Gastrocnemius medialis (tissue), 4 donors: ENCODE measurements at regions of chr3 and their contacts with region 1.

Region 1: GRCh38 chr3:127822698-127823425 is 547 bp upstream of the MGLL start:
- DNase-seq: peak; percentile 48 to 69
- ATAC-seq: peak; percentile 65 to 75
- H3K4me3 ChIP-seq: peak overlapping the region; percentile 67 to 92 (median 85)
- H3K27ac ChIP-seq: peak overlapping the region; percentile 80 to 92 (median 84)
- H3K4me1 ChIP-seq: peaks cover 36 to 45% of the 10 kb centered on the region in 2 donors
- H3K27me3 ChIP-seq: no peaks in the 10 kb centered on the region
- CTCF ChIP-seq: peak in 1 of 5 experiments; percentile 25
- POLR2A ChIP-seq: peak; percentile 43 to 49

Region 2: GRCh38 chr3:127672516-127673190 is 150.2 kb before region 1 on chr3 and contains the start of gene ABTB1:
- in situ Hi-C with region 1: loop called in 1 of 4 experiments (anchors 25 kb)
- intact Hi-C with region 1: loop called (anchors 5 kb)
- DNase-seq: peak; percentile 75 to 81
- ATAC-seq: peak; percentile 84 to 87
- H3K4me3 ChIP-seq: peak within 1 kb of the TSS; percentile 63 to 91 (median 80)
- H3K27ac ChIP-seq: peak within 1 kb of the TSS; percentile 85 to 98 (median 90)
- H3K4me1 ChIP-seq: peaks cover 11 to 19% of the 10 kb centered on the region in 2 donors
- H3K27me3 ChIP-seq: no peaks in the 10 kb centered on the region
- CTCF ChIP-seq: no peak
- POLR2A ChIP-seq: peak; percentile 91 to 93
- total RNA-seq, gene ABTB1: 22.9 to 37.5 (median 30.1) TPM

Region 3: GRCh38 chr3:127750226-127751031 is 72.4 kb before region 1 on chr3:
- in situ Hi-C with region 1: no loop called
- intact Hi-C with region 1: loop called (anchors 1 kb)
- DNase-seq: peak in 1 of 2 donors; percentile 30
- ATAC-seq: peak; percentile 38 to 40
- H3K4me3 ChIP-seq: no peak overlapping the region
- H3K27ac ChIP-seq: peak overlapping the region; percentile 63 to 86 (median 76)
- H3K4me1 ChIP-seq: peaks cover 38 to 54% of the 10 kb centered on the region in 2 donors
- H3K27me3 ChIP-seq: no peaks in the 10 kb centered on the region
- CTCF ChIP-seq: no peak
- POLR2A ChIP-seq: no peak

Region 4: GRCh38 chr3:127762077-127762786 is 60.6 kb before region 1 on chr3:
- in situ Hi-C with region 1: no loop called
- intact Hi-C with region 1: loop called (anchors 1 kb)
- DNase-seq: peak in 1 of 2 donors; percentile 73
- ATAC-seq: peak; percentile 17 to 69
- H3K4me3 ChIP-seq: peak overlapping the region in 3 of 4 donors; percentile 24 to 39 (median 26)
- H3K27ac ChIP-seq: peak overlapping the region; percentile 73 to 78 (median 75)
- H3K4me1 ChIP-seq: peaks cover 42 to 52% of the 10 kb centered on the region in 2 donors
- H3K27me3 ChIP-seq: no peaks in the 10 kb centered on the region
- CTCF ChIP-seq: no peak
- POLR2A ChIP-seq: no peak

Region 5: GRCh38 chr3:127786353-127787070 is 36.4 kb before region 1 on chr3:
- in situ Hi-C with region 1: no loop called
- intact Hi-C with region 1: loop called (anchors 2 kb)
- DNase-seq: peak; percentile 76 to 87
- ATAC-seq: peak; percentile 37 to 57
- H3K4me3 ChIP-seq: peak overlapping the region; percentile 23 to 38 (median 30)
- H3K27ac ChIP-seq: peak overlapping the region; percentile 84 to 92 (median 90)
- H3K4me1 ChIP-seq: peaks cover 77 to 96% of the 10 kb centered on the region in 2 donors
- H3K27me3 ChIP-seq: no peaks in the 10 kb centered on the region
- CTCF ChIP-seq: no peak
- POLR2A ChIP-seq: peak in 1 of 2 donors; percentile 10